Caco-2 (cell line): ENCODE measurements at regions of chr16 and their contacts with region 1.

Region 1: GRCh38 chr16:83898463-83899271 is at the start of gene MLYCD:
- DNase-seq: peak; percentile 94
- H3K4me3 ChIP-seq: peak within 1 kb of the TSS; percentile 94
- H3K4me3 Mint-ChIP-seq: peak within 1 kb of the TSS; percentile 90
- H3K27ac Mint-ChIP-seq: peak within 1 kb of the TSS; percentile 71
- H3K4me1 ChIP-seq: 0 out of 2 replicates have a peak, but pooled peaks cover 12% of the 10 kb centered on the region
- H3K4me1 Mint-ChIP-seq: peaks cover 13% of the 10 kb centered on the region
- H3K27me3 ChIP-seq: no peaks in the 10 kb centered on the region
- H3K27me3 Mint-ChIP-seq: no peaks in the 10 kb centered on the region
- CTCF ChIP-seq: no peak
- total RNA-seq, gene MLYCD: 8.7 and 9.0 TPM in 2 replicates

Region 2: DNA sequence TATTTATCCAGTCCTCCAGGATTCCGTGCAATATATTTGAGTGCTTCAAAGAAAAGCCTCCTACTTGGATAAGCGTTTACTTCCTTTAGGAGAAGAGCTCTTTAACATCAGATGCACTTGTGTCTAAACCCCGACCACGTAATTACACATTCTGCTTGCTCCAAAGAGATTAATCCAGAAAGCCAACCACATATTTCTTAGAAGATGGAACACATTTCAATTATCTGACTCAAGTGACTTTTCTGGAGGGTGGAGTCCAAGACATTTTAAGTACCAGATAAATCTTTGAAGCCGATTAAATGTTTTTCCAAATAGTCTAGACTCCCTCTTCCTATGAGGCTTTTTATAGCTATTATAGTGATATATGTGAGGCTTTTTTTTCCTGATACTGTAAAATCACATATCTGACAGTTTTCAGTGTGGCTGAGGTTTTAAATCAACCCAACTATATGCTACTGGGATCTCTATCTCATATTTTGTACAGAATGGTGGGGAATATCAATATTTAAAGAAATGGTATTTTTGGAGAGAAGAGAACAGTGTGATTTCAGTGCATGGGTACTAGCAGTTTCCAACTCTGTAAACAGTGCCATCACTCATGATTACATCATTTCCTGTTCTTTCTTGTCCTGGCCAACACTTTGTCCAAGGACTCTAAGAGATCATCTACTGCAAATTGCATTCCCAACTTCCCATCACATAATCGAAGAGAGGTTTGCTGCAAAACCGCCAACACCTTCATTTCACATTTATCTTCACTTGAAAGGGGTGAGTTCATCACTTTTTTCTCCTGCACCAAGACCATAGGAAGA is 283.3 kb before region 1 on chr16:
- CTCF ChIA-PET with region 1: no interaction called
- POLR2A ChIA-PET with region 1: no interaction called
- intact Hi-C with region 1: no loop called
- DNase-seq: no peak
- H3K4me3 ChIP-seq: no peak overlapping the region
- H3K4me3 Mint-ChIP-seq: no peak overlapping the region
- H3K27ac Mint-ChIP-seq: no peak overlapping the region
- H3K4me1 ChIP-seq: no peaks in the 10 kb centered on the region
- H3K4me1 Mint-ChIP-seq: no peaks in the 10 kb centered on the region
- H3K27me3 ChIP-seq: no peaks in the 10 kb centered on the region
- H3K27me3 Mint-ChIP-seq: peaks cover 25% of the 10 kb centered on the region
- CTCF ChIP-seq: no peak

Region 3: DNA sequence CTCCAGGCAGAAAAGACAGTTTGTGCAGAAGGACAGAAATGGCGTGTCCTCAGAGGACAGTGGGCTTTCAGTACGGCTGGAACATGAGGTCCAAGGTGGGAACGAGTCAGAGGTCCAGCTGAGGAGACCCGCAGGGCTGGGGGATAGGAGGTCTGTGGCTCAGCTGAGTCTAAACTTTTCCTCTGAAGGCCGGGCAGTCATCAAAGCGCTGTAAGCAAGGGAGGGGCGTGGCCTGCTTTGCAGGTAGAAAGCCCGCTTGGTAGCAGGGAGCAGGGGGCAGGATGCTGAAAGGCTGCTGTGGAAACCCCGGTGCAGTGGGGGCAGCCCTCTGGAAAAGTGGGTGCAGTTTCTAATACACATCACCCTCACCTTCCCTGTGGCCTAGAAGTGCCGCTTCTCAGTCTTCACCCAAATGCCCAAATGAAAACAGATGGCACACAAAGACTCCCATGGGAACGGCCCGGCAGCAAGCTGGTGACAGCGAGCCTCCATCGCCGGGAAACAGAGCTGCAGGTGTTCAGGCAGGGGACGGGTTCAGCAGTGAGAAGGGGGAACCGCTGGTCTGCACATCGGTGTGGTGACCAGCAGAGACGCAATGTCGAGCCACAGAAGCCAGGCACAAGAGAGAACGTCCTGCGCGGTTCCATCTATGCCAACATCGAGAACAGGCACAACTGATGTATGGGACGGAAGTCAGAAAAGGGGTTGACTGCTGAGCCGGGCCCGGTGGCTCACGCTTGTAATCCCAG is 42.1 kb after region 1 on chr16:
- CTCF ChIA-PET with region 1: no interaction called
- POLR2A ChIA-PET with region 1: no interaction called
- intact Hi-C with region 1: no loop called
- DNase-seq: no peak
- H3K4me3 ChIP-seq: no peak overlapping the region
- H3K4me3 Mint-ChIP-seq: no peak overlapping the region
- H3K27ac Mint-ChIP-seq: no peak overlapping the region
- H3K4me1 ChIP-seq: peaks cover 32% of the 10 kb centered on the region
- H3K4me1 Mint-ChIP-seq: peaks cover 21% of the 10 kb centered on the region
- H3K27me3 ChIP-seq: no peaks in the 10 kb centered on the region
- H3K27me3 Mint-ChIP-seq: no peaks in the 10 kb centered on the region
- CTCF ChIP-seq: no peak

Region 4: GRCh38 chr16:83952940-83953795 is 54.5 kb after region 1 on chr16 and contains the start of gene OSGIN1:
- CTCF ChIA-PET with region 1: interaction called, 3 read pairs
- POLR2A ChIA-PET with region 1: interaction called, 6 read pairs
- intact Hi-C with region 1: loop called (anchors 1 kb)
- DNase-seq: peak; percentile 92
- H3K4me3 ChIP-seq: peak within 1 kb of the TSS; percentile 68
- H3K4me3 Mint-ChIP-seq: peak within 1 kb of the TSS; percentile 94
- H3K27ac Mint-ChIP-seq: peak within 1 kb of the TSS; percentile 94
- H3K4me1 ChIP-seq: peaks cover 22% of the 10 kb centered on the region
- H3K4me1 Mint-ChIP-seq: peaks cover 12% of the 10 kb centered on the region
- H3K27me3 ChIP-seq: no peaks in the 10 kb centered on the region
- H3K27me3 Mint-ChIP-seq: no peaks in the 10 kb centered on the region
- CTCF ChIP-seq: no peak
- total RNA-seq, gene OSGIN1: 18.6 and 21.8 TPM in 2 replicates